CD8-positive, alpha-beta T cell (primary cell): ENCODE measurements at regions of chr16 and their contacts with region 1.

Region 1: DNA sequence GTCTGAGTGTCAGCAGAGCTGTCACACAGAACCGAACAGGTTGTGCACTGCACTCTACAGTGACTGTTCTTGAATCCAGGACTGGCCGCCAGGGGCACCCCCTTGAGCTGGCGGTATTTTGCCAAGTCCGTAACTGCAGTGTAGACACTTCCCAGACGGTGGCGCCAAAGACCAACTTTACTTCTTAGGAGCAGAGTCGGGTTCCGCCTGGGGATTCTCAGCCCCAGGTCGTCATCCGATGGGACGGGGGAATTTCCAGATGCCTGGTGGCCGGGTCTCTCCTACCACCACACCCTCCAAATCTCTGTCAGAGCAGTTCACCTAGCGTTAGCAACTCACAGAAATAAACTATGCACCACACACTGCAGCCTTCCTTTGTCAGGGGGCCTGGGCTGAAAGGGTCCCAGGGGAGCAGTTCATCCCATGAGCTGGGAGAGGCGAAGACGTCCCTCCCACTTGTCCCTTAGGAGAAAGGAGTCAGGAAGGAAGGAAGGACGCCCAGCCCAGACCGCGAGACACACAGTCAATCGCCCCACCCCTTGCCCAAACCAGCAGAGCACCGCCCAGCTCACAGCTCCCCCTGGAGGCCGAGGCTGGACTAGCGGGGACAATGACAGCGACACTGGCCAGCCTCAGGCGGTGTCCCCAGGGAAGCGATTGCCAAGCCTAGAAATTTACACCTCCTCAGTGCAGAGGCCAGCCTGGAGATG is 7.4 kb upstream of the RIPOR1 start:
- DNase-seq: peak; percentile 92 to 98 (median 96)
- ATAC-seq: peak; percentile 91
- H3K4me3 ChIP-seq: peak overlapping the region; percentile 58 to 80
- H3K4me3 Mint-ChIP-seq: peak overlapping the region; percentile 92
- H3K27ac ChIP-seq: peak overlapping the region; percentile 65 to 95
- H3K27ac Mint-ChIP-seq: peak overlapping the region; percentile 96
- H3K4me1 ChIP-seq: peaks cover 15% of the 10 kb centered on the region
- H3K4me1 Mint-ChIP-seq: peaks cover 34% of the 10 kb centered on the region
- H3K27me3 ChIP-seq: no peaks in the 10 kb centered on the region
- H3K27me3 Mint-ChIP-seq: no peaks in the 10 kb centered on the region
- CTCF ChIP-seq: peak; percentile 89

Region 2: GRCh38 chr16:67474551-67475455 is 46.4 kb before region 1 on chr16:
- CTCF ChIA-PET with region 1: interaction called, 111 read pairs
- POLR2A ChIA-PET with region 1: no interaction called
- intact Hi-C with region 1: no loop called
- DNase-seq: no peak
- ATAC-seq: no peak
- H3K4me3 ChIP-seq: no peak overlapping the region
- H3K4me3 Mint-ChIP-seq: no peak overlapping the region
- H3K27ac ChIP-seq: no peak overlapping the region
- H3K27ac Mint-ChIP-seq: no peak overlapping the region
- H3K4me1 ChIP-seq: peaks cover 9% of the 10 kb centered on the region
- H3K4me1 Mint-ChIP-seq: peaks cover 55% of the 10 kb centered on the region
- H3K27me3 ChIP-seq: no peaks in the 10 kb centered on the region
- H3K27me3 Mint-ChIP-seq: no peaks in the 10 kb centered on the region
- CTCF ChIP-seq: no peak

Region 3: GRCh38 chr16:67499106-67499505 is 22.1 kb before region 1 on chr16:
- CTCF ChIA-PET with region 1: interaction called, 355 read pairs
- POLR2A ChIA-PET with region 1: interaction called, 4 read pairs
- intact Hi-C with region 1: no loop called
- DNase-seq: no peak
- ATAC-seq: no peak
- H3K4me3 ChIP-seq: no peak overlapping the region
- H3K4me3 Mint-ChIP-seq: no peak overlapping the region
- H3K27ac ChIP-seq: peak overlapping the region in 1 of 2 experiments; percentile 8
- H3K27ac Mint-ChIP-seq: no peak overlapping the region
- H3K4me1 ChIP-seq: peaks cover 10% of the 10 kb centered on the region
- H3K4me1 Mint-ChIP-seq: peaks cover 13% of the 10 kb centered on the region
- H3K27me3 ChIP-seq: no peaks in the 10 kb centered on the region
- H3K27me3 Mint-ChIP-seq: no peaks in the 10 kb centered on the region
- CTCF ChIP-seq: no peak

Region 4: DNA sequence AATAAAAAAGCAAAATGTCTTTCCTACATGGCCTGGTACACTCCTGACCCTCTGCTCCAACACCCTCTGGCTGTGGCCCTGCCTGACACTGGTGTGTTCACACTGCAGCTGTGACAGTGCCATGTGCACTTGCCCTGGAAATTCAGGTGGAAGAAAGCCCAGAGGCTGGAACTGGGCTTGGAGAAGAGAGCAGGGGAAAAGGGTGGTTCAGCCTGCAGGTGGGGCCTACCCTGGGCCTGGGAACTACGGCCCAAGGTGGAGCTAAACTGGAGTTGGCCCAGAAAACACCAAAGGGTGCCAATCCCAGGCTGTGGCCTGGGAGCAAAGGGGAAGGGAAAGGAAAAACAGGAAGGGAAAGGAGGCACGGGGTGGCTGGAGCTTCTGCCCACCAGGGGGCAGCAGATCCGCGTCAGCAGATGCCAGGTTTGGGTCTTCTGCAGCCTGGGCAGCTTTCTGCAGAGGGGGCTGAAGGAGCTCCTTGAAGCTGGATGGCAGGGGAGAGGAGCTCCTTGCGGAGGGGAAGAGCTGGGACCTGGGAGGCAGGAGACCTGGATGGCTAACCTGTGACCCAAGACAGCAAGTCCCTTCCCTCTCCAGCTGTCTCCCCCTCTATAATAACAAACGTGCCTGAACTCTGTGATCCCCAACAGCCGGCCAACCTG is 25.6 kb after region 1 on chr16:
- CTCF ChIA-PET with region 1: interaction called, 92 read pairs
- POLR2A ChIA-PET with region 1: interaction called, 7 read pairs
- intact Hi-C with region 1: loop called in 1 of 2 experiments (anchors 1 kb)
- DNase-seq: peak; percentile 42 to 87 (median 77)
- ATAC-seq: peak; percentile 24
- H3K4me3 ChIP-seq: peak overlapping the region in 1 of 2 experiments; percentile 51
- H3K4me3 Mint-ChIP-seq: peak overlapping the region; percentile 75
- H3K27ac ChIP-seq: peak overlapping the region; percentile 36 to 57
- H3K27ac Mint-ChIP-seq: peak overlapping the region; percentile 94
- H3K4me1 ChIP-seq: peaks cover 42% of the 10 kb centered on the region
- H3K4me1 Mint-ChIP-seq: peaks cover 53% of the 10 kb centered on the region
- H3K27me3 ChIP-seq: no peaks in the 10 kb centered on the region
- H3K27me3 Mint-ChIP-seq: no peaks in the 10 kb centered on the region
- CTCF ChIP-seq: peak; percentile 99

Region 5: DNA sequence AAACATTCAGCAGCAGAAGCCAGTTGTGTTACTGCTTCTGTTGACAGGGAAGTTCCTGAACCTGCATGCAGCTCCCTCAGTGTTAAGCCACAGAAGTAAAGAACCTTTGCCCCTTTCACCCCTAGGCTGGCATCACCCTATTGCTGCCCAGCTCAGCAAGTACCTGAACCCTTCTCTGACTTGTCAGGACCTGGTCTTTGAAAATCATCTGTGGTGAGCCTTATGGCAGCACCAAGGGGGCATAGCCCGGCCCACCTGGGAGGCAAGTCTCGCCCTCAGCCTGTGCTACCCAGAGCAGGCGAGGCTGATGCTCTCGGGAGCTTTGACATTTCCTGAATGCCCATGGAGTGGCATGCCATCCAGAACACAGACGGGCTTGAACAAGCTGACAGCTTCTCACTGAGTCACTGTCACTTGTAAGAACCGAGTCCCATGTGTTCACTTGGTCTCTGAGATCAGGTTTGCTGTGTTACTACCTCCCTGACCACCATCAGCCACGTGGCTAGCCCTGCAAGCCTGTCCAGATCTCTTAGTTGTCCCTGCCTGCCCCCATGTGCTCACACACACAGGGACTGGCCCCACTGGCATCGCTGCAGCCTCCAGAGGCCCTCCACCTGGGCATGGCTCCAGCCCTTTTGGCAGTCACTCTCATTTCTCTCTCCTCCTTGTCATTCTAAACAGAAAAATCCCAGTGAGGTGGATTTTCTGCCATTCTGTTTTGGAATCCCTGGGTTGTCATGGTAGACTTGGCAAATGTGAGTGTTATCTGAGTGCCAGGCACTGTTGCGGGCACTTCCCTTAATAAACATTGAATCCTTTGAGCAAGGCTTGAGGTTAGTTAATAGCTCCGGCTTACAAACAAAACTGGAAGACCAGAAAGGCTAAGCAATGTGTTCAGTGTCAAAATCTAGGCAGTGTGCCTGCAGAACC is 120.8 kb after region 1 on chr16:
- CTCF ChIA-PET with region 1: interaction called, 158 read pairs
- POLR2A ChIA-PET with region 1: interaction called, 15 read pairs
- intact Hi-C with region 1: loop called (anchors 1 kb)
- DNase-seq: no peak
- ATAC-seq: no peak
- H3K4me3 ChIP-seq: no peak overlapping the region
- H3K4me3 Mint-ChIP-seq: no peak overlapping the region
- H3K27ac ChIP-seq: no peak overlapping the region
- H3K27ac Mint-ChIP-seq: no peak overlapping the region
- H3K4me1 ChIP-seq: peaks cover 26% of the 10 kb centered on the region
- H3K4me1 Mint-ChIP-seq: peaks cover 9% of the 10 kb centered on the region
- H3K27me3 ChIP-seq: no peaks in the 10 kb centered on the region
- H3K27me3 Mint-ChIP-seq: no peaks in the 10 kb centered on the region
- CTCF ChIP-seq: no peak

Region 6: GRCh38 chr16:67667817-67668494 is 146.7 kb after region 1 on chr16:
- CTCF ChIA-PET with region 1: interaction called, 165 read pairs
- POLR2A ChIA-PET with region 1: interaction called, 15 read pairs
- intact Hi-C with region 1: loop called (anchors 1 kb)
- DNase-seq: peak; percentile 64 to 91 (median 78)
- ATAC-seq: peak; percentile 90
- H3K4me3 ChIP-seq: peak overlapping the region in 1 of 2 experiments; percentile 84
- H3K4me3 Mint-ChIP-seq: peak overlapping the region; percentile 82
- H3K27ac ChIP-seq: peak overlapping the region in 1 of 2 experiments; percentile 38
- H3K27ac Mint-ChIP-seq: no peak overlapping the region
- H3K4me1 ChIP-seq: peaks cover 17% of the 10 kb centered on the region
- H3K4me1 Mint-ChIP-seq: peaks cover 16% of the 10 kb centered on the region
- H3K27me3 ChIP-seq: no peaks in the 10 kb centered on the region
- H3K27me3 Mint-ChIP-seq: no peaks in the 10 kb centered on the region
- CTCF ChIP-seq: peak; percentile 65

Region 7: GRCh38 chr16:67928561-67929364 is 407.5 kb after region 1 on chr16:
- CTCF ChIA-PET with region 1: interaction called, 11 read pairs
- POLR2A ChIA-PET with region 1: no interaction called
- intact Hi-C with region 1: loop called (anchors 1 to 10 kb)
- DNase-seq: peak; percentile 48 to 82 (median 75)
- ATAC-seq: peak; percentile 97
- H3K4me3 ChIP-seq: no peak overlapping the region
- H3K4me3 Mint-ChIP-seq: no peak overlapping the region
- H3K27ac ChIP-seq: peak overlapping the region in 1 of 2 experiments; percentile 31
- H3K27ac Mint-ChIP-seq: no peak overlapping the region
- H3K4me1 ChIP-seq: no peaks in the 10 kb centered on the region
- H3K4me1 Mint-ChIP-seq: peaks cover 3% of the 10 kb centered on the region
- H3K27me3 ChIP-seq: no peaks in the 10 kb centered on the region
- H3K27me3 Mint-ChIP-seq: no peaks in the 10 kb centered on the region
- CTCF ChIP-seq: peak; percentile 76

Region 8: GRCh38 chr16:68128577-68129305 is 607.5 kb after region 1 on chr16:
- CTCF ChIA-PET with region 1: no interaction called
- POLR2A ChIA-PET with region 1: no interaction called
- intact Hi-C with region 1: no loop called
- DNase-seq: no peak
- ATAC-seq: no peak
- H3K4me3 ChIP-seq: no peak overlapping the region
- H3K4me3 Mint-ChIP-seq: no peak overlapping the region
- H3K27ac ChIP-seq: peak overlapping the region in 1 of 2 experiments; percentile 22
- H3K27ac Mint-ChIP-seq: peak overlapping the region; percentile 71
- H3K4me1 ChIP-seq: peaks cover 50% of the 10 kb centered on the region
- H3K4me1 Mint-ChIP-seq: peaks cover 72% of the 10 kb centered on the region
- H3K27me3 ChIP-seq: no peaks in the 10 kb centered on the region
- H3K27me3 Mint-ChIP-seq: no peaks in the 10 kb centered on the region
- CTCF ChIP-seq: no peak